ENCODE measurements at regions of chr2 and their contacts with region 1.

Region 1: DNA sequence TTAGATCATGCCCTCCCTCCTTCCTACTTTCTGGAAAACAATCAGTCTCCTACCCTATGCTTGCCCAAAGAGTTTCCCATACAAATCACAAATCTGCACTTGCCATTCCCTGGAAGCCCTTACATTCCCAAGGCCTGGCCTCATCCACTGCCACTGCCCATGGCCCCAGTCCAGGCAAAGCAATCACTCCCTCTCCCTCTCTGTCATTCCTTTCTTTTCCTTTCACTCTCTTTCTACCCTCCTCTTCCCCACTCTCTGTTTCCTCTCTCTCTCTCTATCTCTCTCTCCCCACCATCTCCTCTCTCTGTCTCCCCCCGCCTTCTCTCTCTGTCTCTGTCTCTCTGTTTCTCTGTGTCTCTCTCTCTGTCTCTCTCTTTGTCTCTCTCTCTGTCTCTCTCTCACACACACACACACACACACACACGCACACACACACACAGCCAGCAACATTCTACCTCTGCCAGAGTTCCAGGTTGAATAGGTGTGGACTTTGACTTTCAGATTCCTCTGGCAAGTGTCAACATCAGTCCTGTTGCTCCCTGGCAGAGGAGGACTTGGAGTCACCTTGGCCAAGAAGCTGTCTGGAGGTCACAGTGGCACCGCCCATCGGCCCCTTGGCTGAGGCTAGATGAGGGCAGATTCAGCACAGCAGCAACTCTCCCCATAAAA is 43.7 kb upstream of the NAT8 start:
- DNase-seq: no peak

Region 2: GRCh38 chr2:73561422-73561821 is 124.5 kb before region 1 on chr2:
- intact Hi-C with region 1: no loop called
- DNase-seq: no peak

Region 3: DNA sequence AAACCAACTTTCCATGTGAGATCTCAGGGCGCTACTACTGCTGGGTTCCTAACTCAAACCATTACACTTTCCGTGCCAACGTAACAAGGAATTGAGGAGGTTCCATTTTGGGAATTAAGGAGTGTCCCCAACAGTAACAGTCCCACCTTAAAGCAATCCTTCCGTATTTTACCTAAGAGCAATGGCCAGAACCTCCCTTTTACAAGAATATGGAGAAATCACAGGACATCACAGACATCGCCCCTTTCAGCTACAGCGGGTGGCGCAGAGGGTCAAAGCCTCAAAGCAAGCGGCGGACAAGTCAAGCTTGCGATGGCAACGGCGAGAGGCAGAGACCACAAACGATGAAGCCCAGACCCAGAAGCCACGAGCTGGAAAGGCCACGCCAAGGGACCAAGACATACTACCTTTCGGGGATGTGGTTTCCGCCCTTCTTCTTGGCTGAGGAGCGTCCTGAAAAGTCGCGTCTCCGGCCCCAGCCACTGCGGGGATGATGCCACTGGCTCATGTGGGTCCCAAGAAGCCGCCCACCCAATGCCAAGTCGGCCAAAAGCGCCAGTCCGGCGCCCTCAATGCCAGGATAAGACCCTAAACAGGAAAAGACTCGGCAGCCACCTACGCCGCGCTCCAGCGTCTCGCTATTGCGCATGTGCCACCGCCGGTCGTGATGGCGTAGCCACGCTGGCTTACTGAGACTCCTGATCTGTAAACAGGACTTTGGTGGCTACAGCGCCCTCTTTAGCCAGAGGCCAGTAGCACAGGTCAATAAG is 93.7 kb after region 1 on chr2 and contains the start of gene DUSP11:
- intact Hi-C with region 1: loop called (anchors 10 kb)
- DNase-seq: peak; percentile 97
- total RNA-seq, gene DUSP11: 10.9 TPM

Measured in cardiac septum (tissue), 1 donor.